Heart right ventricle (tissue), 16 donors: ENCODE measurements at regions of chr12 and their contacts with region 1.

Region 1: DNA sequence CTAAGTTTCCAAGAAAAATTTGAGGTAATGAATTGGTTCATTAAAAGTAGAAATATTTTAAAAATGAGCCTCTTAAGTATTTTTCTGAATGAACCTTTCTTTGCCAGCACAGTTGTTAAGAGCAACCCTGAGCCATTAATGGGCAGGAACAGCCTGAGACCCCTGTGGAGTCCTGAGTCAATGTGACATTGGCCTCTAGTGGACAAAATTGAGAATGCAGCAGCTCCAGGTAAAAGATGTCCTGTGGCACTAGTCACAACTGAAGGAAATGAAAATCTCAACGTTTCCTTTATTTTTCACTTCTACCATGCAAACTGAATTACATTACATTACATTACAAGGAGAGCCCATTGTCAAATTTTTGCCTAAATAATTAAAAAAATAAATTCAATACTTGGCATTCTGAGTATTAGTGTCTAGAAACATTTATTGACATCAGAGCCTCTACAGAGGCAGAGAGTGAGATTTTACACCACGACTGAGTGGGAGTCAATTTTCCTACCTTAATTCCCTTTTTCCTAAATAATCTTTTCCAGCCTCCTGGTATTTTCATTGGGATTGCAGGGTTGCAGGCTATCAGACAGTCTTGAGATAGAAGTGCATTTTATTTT is 135.7 kb downstream of the PPM1H start:
- DNase-seq: peak in 1 of 2 donors; percentile 72
- ATAC-seq: peak in 7 of 8 donors; percentile 75 to 84 (median 80)
- H3K4me3 ChIP-seq: no peak overlapping the region
- H3K27ac ChIP-seq: no peak overlapping the region
- H3K4me1 ChIP-seq: peaks cover 0 to 6% (median 0%) of the 10 kb centered on the region in 9 donors
- H3K27me3 ChIP-seq: no peaks in the 10 kb centered on the region
- CTCF ChIP-seq: peak; percentile 86 to 97 (median 94)

Region 2: GRCh38 chr12:62581288-62582064 is 217.8 kb before region 1 on chr12:
- intact Hi-C with region 1: loop called (anchors 1 to 5 kb)
- DNase-seq: peak; percentile 4 to 31
- ATAC-seq: peak; percentile 69 to 92 (median 86)
- H3K4me3 ChIP-seq: no peak overlapping the region
- H3K27ac ChIP-seq: peak overlapping the region in 2 of 10 donors; percentile 13 to 37
- H3K4me1 ChIP-seq: peaks cover 0 to 9% (median 0%) of the 10 kb centered on the region in 9 donors
- H3K27me3 ChIP-seq: no peaks in the 10 kb centered on the region
- CTCF ChIP-seq: peak; percentile 38 to 82 (median 73)

Region 3: GRCh38 chr12:62983599-62984022 is 184.4 kb after region 1 on chr12:
- intact Hi-C with region 1: loop called in 1 of 10 experiments (anchors 5 kb)
- DNase-seq: no peak
- ATAC-seq: peak in 1 of 8 donors; percentile 25
- H3K4me3 ChIP-seq: no peak overlapping the region
- H3K27ac ChIP-seq: no peak overlapping the region
- H3K4me1 ChIP-seq: no peaks in the 10 kb centered on the region
- H3K27me3 ChIP-seq: no peaks in the 10 kb centered on the region
- CTCF ChIP-seq: peak in 7 of 9 donors; percentile 15 to 51 (median 27)

Region 4: GRCh38 chr12:63079791-63080502 is 280.7 kb after region 1 on chr12:
- intact Hi-C with region 1: loop called in 1 of 10 experiments (anchors 10 kb)
- DNase-seq: no peak
- ATAC-seq: no peak
- H3K4me3 ChIP-seq: no peak overlapping the region
- H3K27ac ChIP-seq: no peak overlapping the region
- H3K4me1 ChIP-seq: peaks cover 0 to 5% (median 0%) of the 10 kb centered on the region in 9 donors
- H3K27me3 ChIP-seq: no peaks in the 10 kb centered on the region
- CTCF ChIP-seq: no peak